Testis (tissue), 5 donors: ENCODE measurements at regions of chr4 and their contacts with region 1.

Region 1: DNA sequence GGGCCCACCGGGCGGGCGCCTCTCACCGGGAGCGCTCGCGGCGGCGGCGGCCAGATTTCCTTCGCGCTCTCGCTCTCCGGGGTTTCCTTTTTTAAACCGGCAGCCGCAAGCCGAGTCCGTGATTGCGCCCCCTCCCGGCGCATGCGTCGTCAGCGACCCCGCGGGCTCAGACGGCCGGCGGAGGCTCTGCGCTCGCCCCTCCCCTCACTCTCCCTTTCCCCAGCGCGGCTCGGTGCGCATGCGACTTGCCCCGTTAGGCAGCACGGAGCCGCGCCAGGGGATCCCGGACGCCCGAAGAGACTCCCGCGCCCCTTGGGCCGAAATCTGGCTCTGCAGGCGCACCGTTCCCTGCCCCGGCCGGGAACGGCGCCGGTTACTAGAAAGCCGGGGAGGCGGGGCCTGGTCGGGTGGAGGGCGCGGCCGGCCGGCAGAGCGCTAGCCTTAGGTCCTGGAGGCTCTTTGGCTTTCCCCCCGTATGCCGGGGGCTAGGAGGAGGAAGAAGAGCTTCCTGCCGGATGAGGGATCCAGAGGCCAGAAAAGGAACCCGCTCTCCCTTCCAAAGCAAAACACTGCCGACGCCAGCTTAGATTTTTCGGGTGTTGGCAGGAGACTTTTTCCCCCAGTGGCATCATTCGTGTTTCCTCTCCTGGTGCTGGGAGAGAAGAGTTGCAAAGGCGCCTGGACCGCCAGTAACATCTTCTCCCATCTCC is at the start of gene CLOCK:
- DNase-seq: peak; percentile 89
- H3K4me3 ChIP-seq: peak within 1 kb of the TSS; percentile 96 to 99
- H3K27ac ChIP-seq: peak within 1 kb of the TSS; percentile 96 to 99
- H3K4me1 ChIP-seq: no peaks in the 10 kb centered on the region
- H3K27me3 ChIP-seq: no peaks in the 10 kb centered on the region
- CTCF ChIP-seq: peak; percentile 43 to 63 (median 56)
- POLR2A ChIP-seq: no peak
- total RNA-seq, gene CLOCK: 43.4 to 48.6 TPM

Region 2: DNA sequence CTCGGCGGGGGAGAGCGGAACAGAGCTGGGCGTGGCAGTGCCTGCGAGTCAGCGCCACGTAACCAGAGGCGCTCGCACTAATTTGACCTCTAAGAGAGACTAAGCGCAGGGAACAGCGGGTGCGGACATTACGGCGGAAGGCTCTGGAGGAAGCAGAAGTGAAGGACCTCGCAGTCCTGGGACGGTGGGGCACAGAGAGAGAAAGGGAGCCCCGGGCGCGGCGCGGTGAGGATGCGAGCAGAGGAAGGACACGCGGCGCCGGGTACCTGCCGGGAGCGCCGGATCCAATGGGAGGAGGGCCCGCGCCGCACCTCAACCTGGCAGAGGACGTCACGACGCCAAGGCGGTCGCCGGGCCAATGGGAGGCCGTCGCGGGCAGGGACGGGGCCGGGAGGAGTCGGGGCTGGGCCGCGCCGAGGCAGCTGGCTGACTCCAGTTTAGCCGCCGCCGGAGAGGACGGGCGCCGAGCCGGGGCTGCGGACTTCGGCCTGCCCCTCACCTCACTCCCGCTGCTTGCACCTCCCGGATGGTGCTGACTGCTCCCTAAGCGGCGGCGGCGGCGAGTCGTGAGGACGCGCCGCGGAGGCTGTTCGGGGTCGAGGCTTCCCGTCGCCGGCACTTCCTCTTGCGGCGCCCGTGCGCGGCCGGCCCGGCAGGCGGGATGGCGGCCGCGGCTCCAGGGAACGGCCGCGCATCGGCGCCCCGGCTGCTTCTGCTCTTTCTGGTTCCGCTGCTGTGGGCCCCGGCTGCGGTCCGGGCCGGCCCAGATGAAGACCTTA is 151.2 kb before region 1 on chr4 and contains the start of gene TMEM165:
- intact Hi-C with region 1: loop called (anchors 5 kb)
- DNase-seq: peak; percentile 95
- H3K4me3 ChIP-seq: peak within 1 kb of the TSS; percentile 87 to 98
- H3K27ac ChIP-seq: peak within 1 kb of the TSS; percentile 93 to 99
- H3K4me1 ChIP-seq: peaks cover 23% of the 10 kb centered on the region
- H3K27me3 ChIP-seq: no peaks in the 10 kb centered on the region
- CTCF ChIP-seq: peak in 2 of 3 experiments; percentile 8 to 22
- POLR2A ChIP-seq: peak; percentile 86
- total RNA-seq, gene TMEM165: 94.8 to 122 TPM